ENCODE measurements at regions of chr17 and their contacts with region 1.

Region 1: GRCh38 chr17:66636111-66636510 is 198.8 kb upstream of the CACNG5 start:
- DNase-seq: peak; percentile 80
- H3K4me3 ChIP-seq: no peak overlapping the region
- H3K27ac ChIP-seq: no peak overlapping the region
- H3K4me1 ChIP-seq: peaks cover 25% of the 10 kb centered on the region
- H3K27me3 ChIP-seq: no peaks in the 10 kb centered on the region
- CTCF ChIP-seq: no peak

Region 2: GRCh38 chr17:66655861-66656260 is 19.8 kb after region 1 on chr17:
- CTCF ChIA-PET with region 1: no interaction called
- dilution Hi-C with region 1: no loop called
- in situ Hi-C with region 1: no loop called
- intact Hi-C with region 1: loop called (anchors 2 kb)
- DNase-seq: peak; percentile 96
- H3K4me3 ChIP-seq: no peak overlapping the region
- H3K27ac ChIP-seq: peak overlapping the region; percentile 49
- H3K4me1 ChIP-seq: peaks cover 45% of the 10 kb centered on the region
- H3K27me3 ChIP-seq: no peaks in the 10 kb centered on the region
- CTCF ChIP-seq: no peak

Region 3: DNA sequence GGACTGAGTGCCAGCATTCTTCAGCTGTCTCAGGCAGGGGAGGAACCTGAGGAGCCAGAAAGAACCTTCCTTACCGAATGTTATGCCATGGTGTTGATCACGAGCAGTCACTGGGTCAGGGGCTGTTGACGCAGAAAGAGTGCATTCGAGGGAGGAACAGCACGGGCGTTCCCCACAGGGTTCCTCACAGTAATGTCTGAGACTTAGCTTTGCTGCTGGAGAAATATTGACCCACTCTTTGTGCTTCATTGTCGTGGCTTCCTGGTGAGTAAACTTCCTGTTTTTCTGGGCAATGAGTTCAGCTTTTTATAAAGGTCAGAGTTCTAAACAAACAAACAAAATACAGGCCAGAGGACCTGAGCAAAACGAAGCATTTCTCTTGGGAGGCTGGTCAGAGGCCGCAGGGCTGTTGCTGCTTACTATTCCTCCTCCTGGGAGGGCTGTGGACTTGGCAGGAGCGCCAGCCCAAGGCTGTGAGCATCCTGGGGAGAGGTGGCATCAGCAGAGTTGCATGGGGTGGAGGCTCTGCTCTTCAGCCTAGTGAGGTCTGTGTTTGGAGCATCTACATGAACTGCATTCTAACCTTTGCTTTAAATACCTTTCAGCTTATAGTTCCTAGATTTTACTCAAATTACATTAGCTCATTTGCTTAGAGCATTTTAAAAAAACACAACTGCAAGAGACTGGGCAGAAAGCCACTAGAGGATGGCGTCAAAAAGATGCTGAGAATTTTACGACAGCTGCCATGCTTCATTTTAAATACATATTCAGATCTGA is 55.7 kb after region 1 on chr17:
- CTCF ChIA-PET with region 1: no interaction called
- dilution Hi-C with region 1: no loop called
- in situ Hi-C with region 1: no loop called
- intact Hi-C with region 1: no loop called
- DNase-seq: no peak
- H3K4me3 ChIP-seq: no peak overlapping the region
- H3K27ac ChIP-seq: no peak overlapping the region
- H3K4me1 ChIP-seq: no peaks in the 10 kb centered on the region
- H3K27me3 ChIP-seq: no peaks in the 10 kb centered on the region
- CTCF ChIP-seq: no peak